ENCODE measurements at regions of chr22 and their contacts with region 1.

Region 1: DNA sequence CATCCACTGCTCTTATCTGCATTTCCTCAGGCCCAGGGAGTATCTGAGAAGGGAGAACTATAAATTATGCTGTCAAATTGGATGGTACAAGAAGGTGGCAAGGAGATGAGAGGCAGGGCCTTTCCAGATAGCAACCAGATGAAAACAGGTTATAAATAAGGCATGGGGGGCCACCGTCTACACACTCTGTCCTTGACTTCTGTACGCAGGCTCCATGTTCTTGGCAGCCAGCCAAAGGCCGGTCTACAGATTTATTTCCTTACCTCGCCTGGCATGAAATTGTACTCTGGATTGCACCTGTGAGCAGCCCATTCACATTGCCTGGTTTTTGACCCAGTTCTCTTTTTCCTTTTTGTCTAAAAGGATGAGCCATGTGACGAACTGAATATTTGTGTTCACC is 157.1 kb upstream of the LARGE1 start:
- DNase-seq: no peak
- ATAC-seq: no peak
- H3K4me3 ChIP-seq: no peak overlapping the region
- H3K27ac ChIP-seq: no peak overlapping the region
- H3K4me1 ChIP-seq: no peaks in the 10 kb centered on the region
- H3K27me3 ChIP-seq: peaks cover 0 to 11% (median 0%) of the 10 kb centered on the region in 7 donors
- CTCF ChIP-seq: no peak

Region 2: GRCh38 chr22:34017205-34017604 is 60.2 kb before region 1 on chr22:
- intact Hi-C with region 1: loop called in 1 of 10 experiments (anchors 10 kb)
- DNase-seq: no peak
- ATAC-seq: no peak
- H3K4me3 ChIP-seq: no peak overlapping the region
- H3K27ac ChIP-seq: no peak overlapping the region
- H3K4me1 ChIP-seq: no peaks in the 10 kb centered on the region
- H3K27me3 ChIP-seq: peaks cover 0 to 7% (median 0%) of the 10 kb centered on the region in 7 donors
- CTCF ChIP-seq: no peak

Region 3: GRCh38 chr22:34129691-34130486 is 52.5 kb after region 1 on chr22:
- intact Hi-C with region 1: loop called in 1 of 10 experiments (anchors 10 kb)
- DNase-seq: no peak
- ATAC-seq: no peak
- H3K4me3 ChIP-seq: no peak overlapping the region
- H3K27ac ChIP-seq: no peak overlapping the region
- H3K4me1 ChIP-seq: no peaks in the 10 kb centered on the region
- H3K27me3 ChIP-seq: peaks cover 0 to 25% (median 0%) of the 10 kb centered on the region in 7 donors
- CTCF ChIP-seq: no peak

Measured in heart right ventricle (tissue), 16 donors.